MCF 10A (cell line): ENCODE measurements at regions of chr21 and their contacts with region 1.

Region 1: GRCh38 chr21:37563641-37564340 is 197.2 kb downstream of the DYRK1A start:
- DNase-seq: peak; percentile 94
- H3K4me3 Mint-ChIP-seq: peak overlapping the region; percentile 92
- H3K27ac Mint-ChIP-seq: peak overlapping the region; percentile 96
- H3K4me1 Mint-ChIP-seq: peaks cover 15% of the 10 kb centered on the region
- H3K27me3 Mint-ChIP-seq: peaks cover 2% of the 10 kb centered on the region
- CTCF ChIP-seq: peak; percentile 42

Region 2: DNA sequence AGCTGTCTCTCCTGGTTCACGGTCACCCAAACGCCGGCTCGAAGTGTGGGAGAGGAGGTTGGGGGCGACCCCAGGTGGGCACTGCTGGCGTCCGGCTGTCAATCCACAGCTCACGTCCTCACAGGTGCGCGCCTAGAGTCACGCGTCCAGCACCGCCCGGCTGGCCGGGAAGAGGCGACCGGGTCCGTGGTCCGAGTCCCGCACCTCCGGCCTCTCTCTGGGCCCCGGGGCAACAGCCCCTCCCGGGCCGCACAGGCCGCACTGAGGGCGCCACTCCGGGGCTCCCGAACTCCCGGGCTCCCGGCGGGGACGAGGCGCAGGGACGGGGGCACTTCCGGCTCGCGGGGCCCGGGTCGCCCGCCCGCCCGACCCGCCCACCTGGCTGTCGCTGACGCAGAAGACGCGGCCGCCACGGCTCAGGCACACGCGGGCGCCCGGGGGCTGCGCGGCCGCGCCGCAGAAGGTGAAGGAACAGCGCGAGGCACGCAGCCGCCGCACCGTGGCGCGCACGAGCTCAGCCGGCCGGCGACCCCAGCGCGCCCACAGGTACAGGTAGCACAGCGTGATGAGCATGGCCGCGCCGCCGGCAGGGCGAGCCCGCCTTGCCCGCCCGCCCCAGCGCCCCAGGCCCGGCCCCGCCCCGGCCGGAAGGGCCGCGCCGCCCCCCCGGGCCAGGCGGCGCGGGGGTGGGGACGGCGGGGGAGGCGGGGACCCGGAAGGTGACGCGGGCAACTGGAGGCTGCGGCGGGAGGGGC is 597.5 kb before region 1 on chr21 and contains the start of gene HLCS:
- CTCF ChIA-PET with region 1: no interaction called
- POLR2A ChIA-PET with region 1: no interaction called
- intact Hi-C with region 1: no loop called
- DNase-seq: peak; percentile 66
- H3K4me3 Mint-ChIP-seq: peak within 1 kb of the TSS; percentile 78
- H3K27ac Mint-ChIP-seq: peak within 1 kb of the TSS; percentile 73
- H3K4me1 Mint-ChIP-seq: peaks cover 12% of the 10 kb centered on the region
- H3K27me3 Mint-ChIP-seq: no peaks in the 10 kb centered on the region
- CTCF ChIP-seq: no peak
- total RNA-seq, gene HLCS: 45.1 and 46.1 TPM in 2 replicates

Region 3: DNA sequence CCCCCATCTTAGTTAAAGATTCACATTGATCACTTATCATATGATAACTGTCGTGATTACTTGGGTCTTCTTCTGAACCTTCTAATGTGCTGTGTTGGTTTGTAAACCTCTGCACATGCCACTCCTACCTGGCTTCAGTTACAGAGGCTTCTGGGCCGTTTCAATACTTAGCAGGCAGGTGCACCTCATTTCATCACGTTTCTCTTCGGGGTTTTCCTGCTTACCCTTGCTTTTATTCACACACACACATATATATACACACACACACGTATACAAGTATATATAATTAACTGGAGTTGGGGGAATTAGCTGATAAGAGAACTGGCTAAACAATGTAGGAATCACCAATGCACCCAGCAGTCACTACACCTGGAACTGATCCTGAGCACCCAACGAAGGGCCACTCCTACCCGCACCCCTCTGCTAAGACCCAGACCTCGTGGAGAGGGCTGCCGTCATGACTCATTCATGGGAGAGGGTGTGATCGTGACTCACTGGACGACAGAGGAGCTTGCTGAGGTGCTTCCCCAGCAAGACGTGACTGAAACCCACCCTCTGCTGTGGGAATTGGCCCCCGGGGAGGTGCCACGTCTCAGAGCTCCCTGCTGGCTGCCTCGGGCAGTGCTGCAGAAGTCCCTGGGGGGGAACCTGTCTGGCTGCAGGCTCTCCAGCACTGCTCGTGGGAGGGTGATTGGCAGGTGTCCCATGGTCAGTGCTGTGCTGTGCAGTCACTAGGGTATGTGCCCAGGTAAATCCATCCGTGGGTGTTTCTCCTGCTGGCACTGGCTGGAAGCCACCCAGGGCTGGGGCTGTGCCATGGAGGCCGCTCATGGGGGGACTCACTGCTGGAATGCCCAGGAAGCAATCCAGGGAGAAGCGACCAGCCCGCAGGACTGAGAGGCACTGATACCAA is 30.7 kb before region 1 on chr21:
- CTCF ChIA-PET with region 1: interaction called, 3 read pairs
- POLR2A ChIA-PET with region 1: interaction called, 11 read pairs
- intact Hi-C with region 1: no loop called
- DNase-seq: peak; percentile 91
- H3K4me3 Mint-ChIP-seq: peak overlapping the region; percentile 68
- H3K27ac Mint-ChIP-seq: peak overlapping the region; percentile 76
- H3K4me1 Mint-ChIP-seq: peaks cover 34% of the 10 kb centered on the region
- H3K27me3 Mint-ChIP-seq: no peaks in the 10 kb centered on the region
- CTCF ChIP-seq: no peak

Region 4: GRCh38 chr21:37619464-37619974 is 55.7 kb after region 1 on chr21:
- CTCF ChIA-PET with region 1: interaction called, 3 read pairs
- POLR2A ChIA-PET with region 1: interaction called, 13 read pairs
- intact Hi-C with region 1: no loop called
- DNase-seq: peak; percentile 84
- H3K4me3 Mint-ChIP-seq: no peak overlapping the region
- H3K27ac Mint-ChIP-seq: no peak overlapping the region
- H3K4me1 Mint-ChIP-seq: peaks cover 9% of the 10 kb centered on the region
- H3K27me3 Mint-ChIP-seq: no peaks in the 10 kb centered on the region
- CTCF ChIP-seq: peak; percentile 13

Region 5: GRCh38 chr21:37658817-37659458 is 95.1 kb after region 1 on chr21:
- CTCF ChIA-PET with region 1: no interaction called
- POLR2A ChIA-PET with region 1: interaction called, 11 read pairs
- intact Hi-C with region 1: loop called (anchors 2 kb)
- DNase-seq: peak; percentile 83
- H3K4me3 Mint-ChIP-seq: peak overlapping the region; percentile 6
- H3K27ac Mint-ChIP-seq: peak overlapping the region; percentile 75
- H3K4me1 Mint-ChIP-seq: peaks cover 29% of the 10 kb centered on the region
- H3K27me3 Mint-ChIP-seq: no peaks in the 10 kb centered on the region
- CTCF ChIP-seq: peak; percentile 26